ENCODE measurements at regions of chr4 and their contacts with region 1.

Region 1: GRCh38 chr4:41692717-41693345 is 55.7 kb downstream of the PHOX2B start:
- DNase-seq: peak; percentile 56
- ATAC-seq: peak; percentile 67
- H3K4me3 ChIP-seq: no peak overlapping the region
- H3K27ac ChIP-seq: no peak overlapping the region
- H3K4me1 ChIP-seq: no peaks in the 10 kb centered on the region
- H3K27me3 ChIP-seq: no peaks in the 10 kb centered on the region
- CTCF ChIP-seq: peak; percentile 87

Region 2: GRCh38 chr4:41814565-41814964 is 121.7 kb after region 1 on chr4:
- CTCF ChIA-PET with region 1: no interaction called
- POLR2A ChIA-PET with region 1: no interaction called
- intact Hi-C with region 1: loop called (anchors 1 kb)
- DNase-seq: peak; percentile 52
- ATAC-seq: peak; percentile 67
- H3K4me3 ChIP-seq: no peak overlapping the region
- H3K27ac ChIP-seq: no peak overlapping the region
- H3K4me1 ChIP-seq: no peaks in the 10 kb centered on the region
- H3K27me3 ChIP-seq: peaks cover 25% of the 10 kb centered on the region
- CTCF ChIP-seq: peak; percentile 61

Region 3: DNA sequence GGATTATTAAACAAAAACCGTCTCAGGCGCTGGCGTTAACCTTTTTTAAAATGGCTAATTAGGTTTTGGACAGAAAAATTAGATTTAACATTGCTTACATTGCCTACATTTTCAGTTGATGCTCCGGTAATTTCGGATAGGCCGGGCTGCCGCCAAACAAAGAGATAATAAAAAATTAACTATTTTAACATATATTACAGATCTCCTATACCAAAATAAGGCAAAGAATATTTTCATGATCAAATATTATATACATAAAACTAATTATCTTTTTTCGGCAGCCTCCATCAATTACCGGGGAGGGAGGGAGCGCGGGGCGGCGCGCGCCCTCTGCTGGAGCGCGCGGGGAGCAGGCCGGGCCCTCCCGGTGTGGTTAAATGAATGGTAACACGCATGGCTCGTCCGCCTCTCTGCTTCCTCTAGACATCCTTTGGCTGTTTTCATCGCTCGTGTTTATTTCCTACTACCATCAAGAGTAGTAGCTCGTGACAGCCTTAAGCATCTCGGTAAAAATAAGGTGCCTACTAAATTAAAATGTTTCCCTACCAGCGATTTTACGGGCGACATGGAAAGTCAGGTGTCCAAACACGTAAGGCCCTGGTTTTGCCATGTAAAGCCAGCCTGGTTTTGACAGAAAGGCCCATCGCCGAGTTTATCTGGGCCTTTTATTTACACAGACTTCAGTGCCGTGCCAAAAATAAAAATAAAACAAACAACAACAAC is 190.0 kb after region 1 on chr4:
- CTCF ChIA-PET with region 1: no interaction called
- POLR2A ChIA-PET with region 1: no interaction called
- intact Hi-C with region 1: loop called (anchors 1 kb)
- DNase-seq: peak; percentile 39
- ATAC-seq: peak; percentile 74
- H3K4me3 ChIP-seq: no peak overlapping the region
- H3K27ac ChIP-seq: no peak overlapping the region
- H3K4me1 ChIP-seq: no peaks in the 10 kb centered on the region
- H3K27me3 ChIP-seq: peaks cover 24% of the 10 kb centered on the region; the same call in 1 of the 2 replicates
- CTCF ChIP-seq: peak; percentile 80

Region 4: GRCh38 chr4:41887821-41888686 is 195.2 kb after region 1 on chr4:
- CTCF ChIA-PET with region 1: no interaction called
- POLR2A ChIA-PET with region 1: no interaction called
- intact Hi-C with region 1: loop called (anchors 1 kb)
- DNase-seq: peak; percentile 62
- ATAC-seq: no peak
- H3K4me3 ChIP-seq: no peak overlapping the region
- H3K27ac ChIP-seq: no peak overlapping the region
- H3K4me1 ChIP-seq: peaks cover 15% of the 10 kb centered on the region
- H3K27me3 ChIP-seq: no peaks in the 10 kb centered on the region
- CTCF ChIP-seq: peak; percentile 85